Activated CD4-positive, alpha-beta memory T cell treated with anti-CD3 and anti-CD28 coated beads for 36 hours (primary cell): ENCODE measurements at regions of chr11 and their contacts with region 1.

Region 1: GRCh38 chr11:101860696-101861427 is 53.9 kb upstream of the CEP126 start:
- DNase-seq: peak; percentile 14
- H3K4me3 Mint-ChIP-seq: no peak overlapping the region
- H3K27ac Mint-ChIP-seq: no peak overlapping the region
- H3K4me1 Mint-ChIP-seq: no peaks in the 10 kb centered on the region
- H3K27me3 Mint-ChIP-seq: peaks cover 5% of the 10 kb centered on the region

Region 2: DNA sequence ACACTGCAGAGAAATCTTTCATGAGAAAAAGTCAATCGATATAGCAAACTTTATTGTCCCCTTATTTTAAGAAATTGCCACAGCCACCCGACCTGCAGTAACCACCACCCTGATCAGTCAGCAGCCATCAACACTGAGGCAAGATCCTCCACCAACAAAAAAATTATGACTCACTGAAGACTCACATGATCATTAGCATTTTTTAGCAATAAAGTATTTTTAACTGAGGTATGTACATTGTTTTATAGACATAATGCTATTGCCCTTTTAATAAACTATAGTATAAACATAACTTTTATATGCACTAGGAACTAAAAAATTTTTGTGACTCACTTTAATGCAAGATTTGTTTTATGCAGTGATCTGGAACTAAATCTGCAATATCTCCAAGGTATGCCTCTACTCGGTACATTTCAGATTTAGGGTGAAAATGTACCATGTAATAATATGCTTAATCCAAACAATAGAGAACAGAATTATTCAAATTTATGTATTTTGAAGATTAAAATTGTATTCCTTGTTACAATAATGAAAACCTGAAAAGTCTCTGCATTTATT is 25.3 kb before region 1 on chr11:
- CTCF ChIA-PET with region 1: interaction called, 10 read pairs
- POLR2A ChIA-PET with region 1: no interaction called
- intact Hi-C with region 1: no loop called
- DNase-seq: no peak
- H3K4me3 Mint-ChIP-seq: no peak overlapping the region
- H3K27ac Mint-ChIP-seq: no peak overlapping the region
- H3K4me1 Mint-ChIP-seq: no peaks in the 10 kb centered on the region
- H3K27me3 Mint-ChIP-seq: peaks cover 2% of the 10 kb centered on the region

Region 3: DNA sequence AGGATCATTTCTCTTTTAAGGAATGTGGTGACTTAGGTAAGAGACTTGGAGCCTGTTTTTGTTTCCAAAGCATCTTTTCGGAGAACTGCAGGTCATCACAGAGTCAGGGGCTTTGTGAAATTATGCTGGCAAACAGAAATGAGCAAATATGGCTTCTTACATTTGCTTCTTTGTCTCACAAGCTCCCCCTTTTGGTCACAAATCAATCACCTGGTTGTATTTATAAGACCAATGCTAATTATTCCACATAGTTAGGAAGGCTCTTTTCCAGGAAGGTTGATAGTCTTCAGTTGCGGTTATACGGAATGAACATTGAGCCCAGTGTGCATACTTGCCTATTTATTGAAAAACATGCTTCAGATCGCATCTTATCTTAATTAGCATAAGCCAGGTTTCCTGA is 19.4 kb after region 1 on chr11:
- CTCF ChIA-PET with region 1: interaction called, 14 read pairs
- POLR2A ChIA-PET with region 1: no interaction called
- intact Hi-C with region 1: no loop called
- DNase-seq: no peak
- H3K4me3 Mint-ChIP-seq: no peak overlapping the region
- H3K27ac Mint-ChIP-seq: no peak overlapping the region
- H3K4me1 Mint-ChIP-seq: no peaks in the 10 kb centered on the region
- H3K27me3 Mint-ChIP-seq: peaks cover 5% of the 10 kb centered on the region

Region 4: GRCh38 chr11:102007567-102008437 is 146.9 kb after region 1 on chr11:
- CTCF ChIA-PET with region 1: interaction called, 195 read pairs
- POLR2A ChIA-PET with region 1: no interaction called
- intact Hi-C with region 1: loop called (anchors 1 kb)
- DNase-seq: no peak
- H3K4me3 Mint-ChIP-seq: no peak overlapping the region
- H3K27ac Mint-ChIP-seq: no peak overlapping the region
- H3K4me1 Mint-ChIP-seq: peaks cover 8% of the 10 kb centered on the region
- H3K27me3 Mint-ChIP-seq: peaks cover 8% of the 10 kb centered on the region